ENCODE measurements at regions of chr6 and their contacts with region 1.

Region 1: GRCh38 chr6:32868257-32868788 is 14.3 kb downstream of the PSMB9 start:
- DNase-seq: peak; percentile 69 to 87 (median 82)
- ATAC-seq: peak; percentile 87
- H3K4me3 ChIP-seq: no peak overlapping the region
- H3K4me3 Mint-ChIP-seq: peak overlapping the region in 3 of 10 donors; percentile 0 to 65 (median 50)
- H3K27ac ChIP-seq: no peak overlapping the region
- H3K27ac Mint-ChIP-seq: peak overlapping the region in 4 of 9 donors; percentile 1 to 78 (median 14)
- H3K4me1 ChIP-seq: peaks cover 4 to 20% of the 10 kb centered on the region in 2 donors
- H3K4me1 Mint-ChIP-seq: peaks cover 18 to 36% (median 34%) of the 10 kb centered on the region in 7 donors
- H3K27me3 ChIP-seq: no peaks in the 10 kb centered on the region
- H3K27me3 Mint-ChIP-seq: peaks cover 0 to 4% (median 0%) of the 10 kb centered on the region in 5 donors

Region 2: DNA sequence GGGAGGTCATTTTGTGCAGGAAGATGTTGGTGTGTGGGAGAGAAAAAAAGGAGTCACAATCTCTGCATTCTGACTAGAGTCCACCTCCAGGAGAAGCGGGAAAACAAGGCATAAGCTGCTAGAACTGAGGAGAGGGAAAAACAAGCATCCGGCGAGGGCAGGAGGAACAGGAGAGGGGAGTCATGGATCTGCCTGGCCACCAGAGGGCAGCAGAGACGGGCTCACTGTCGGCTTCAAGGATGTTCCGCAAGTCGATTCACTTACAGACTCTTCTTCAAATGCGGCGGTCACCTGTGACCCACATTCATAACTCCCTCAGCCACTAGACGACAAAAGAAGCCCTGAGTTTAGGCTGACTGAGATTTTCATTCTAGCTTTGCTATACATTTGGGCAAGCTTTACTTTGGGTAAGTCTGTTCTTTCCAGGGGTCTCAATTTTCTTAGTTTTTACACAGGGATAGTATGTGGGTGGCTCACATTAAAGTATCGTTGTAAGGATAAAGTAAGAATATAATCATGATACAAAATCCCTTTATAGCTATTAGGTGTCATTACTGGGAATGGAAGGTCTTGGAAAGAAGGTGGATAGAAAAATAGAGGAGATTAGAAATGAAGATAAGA is 454.8 kb before region 1 on chr6:
- CTCF ChIA-PET with region 1: interaction called, 27 read pairs
- POLR2A ChIA-PET with region 1: no interaction called
- intact Hi-C with region 1: loop called (anchors 1 to 5 kb)
- DNase-seq: peak; percentile 54 to 85 (median 79)
- ATAC-seq: peak; percentile 96
- H3K4me3 ChIP-seq: no peak overlapping the region
- H3K4me3 Mint-ChIP-seq: no peak overlapping the region
- H3K27ac ChIP-seq: no peak overlapping the region
- H3K27ac Mint-ChIP-seq: no peak overlapping the region
- H3K4me1 ChIP-seq: no peaks in the 10 kb centered on the region
- H3K4me1 Mint-ChIP-seq: peaks cover 3 to 14% (median 8%) of the 10 kb centered on the region in 7 donors
- H3K27me3 ChIP-seq: peaks cover 0 to 3% of the 10 kb centered on the region in 2 donors
- H3K27me3 Mint-ChIP-seq: peaks cover 30 to 62% (median 45%) of the 10 kb centered on the region in 5 donors

Region 3: DNA sequence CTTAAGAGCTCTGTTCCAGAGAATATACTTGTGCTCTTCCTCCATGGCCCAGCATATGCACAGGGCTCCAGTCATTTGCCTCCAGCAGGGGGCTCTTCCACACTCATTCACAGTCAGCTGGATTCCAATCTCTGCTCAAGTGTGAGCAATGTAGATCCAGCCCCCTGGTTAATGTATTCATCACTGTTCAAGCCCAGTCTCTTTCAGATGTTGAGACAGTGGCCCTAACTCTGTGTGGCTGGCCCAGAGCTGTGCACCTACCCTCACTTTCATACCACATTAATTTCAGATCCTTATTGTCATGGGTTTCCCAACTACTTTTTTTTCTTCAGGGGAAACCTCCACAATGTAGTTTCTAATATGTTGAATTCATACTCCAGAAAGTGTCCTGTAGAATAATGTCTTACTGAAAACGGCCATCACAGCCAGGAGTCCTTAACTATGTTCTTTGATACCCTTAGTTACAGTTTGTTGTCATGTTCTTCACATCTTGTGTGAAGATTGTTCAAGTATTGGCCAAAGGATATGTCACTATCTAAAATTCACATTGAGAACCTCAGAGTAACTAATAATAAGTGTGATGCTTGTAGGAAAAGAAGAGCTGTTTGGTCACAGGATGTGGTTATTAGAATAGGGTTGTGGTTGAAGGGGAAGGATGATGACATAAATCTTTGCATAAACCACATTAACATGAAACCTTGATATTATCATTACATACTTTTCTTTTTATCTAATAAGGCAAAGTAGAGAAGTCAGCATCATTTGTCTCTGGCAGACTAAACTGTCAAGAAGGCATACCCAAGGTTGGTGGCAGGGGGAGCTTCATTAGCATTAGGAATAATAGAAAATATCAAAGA is 245.6 kb before region 1 on chr6:
- CTCF ChIA-PET with region 1: no interaction called
- POLR2A ChIA-PET with region 1: interaction called, 4 read pairs
- intact Hi-C with region 1: loop called in 1 of 2 experiments (anchors 1 kb)
- DNase-seq: peak in 8 of 9 donors; percentile 26 to 90 (median 74)
- ATAC-seq: peak; percentile 87
- H3K4me3 ChIP-seq: peak overlapping the region; percentile 5
- H3K4me3 Mint-ChIP-seq: peak overlapping the region in 9 of 10 donors; percentile 14 to 86 (median 72)
- H3K27ac ChIP-seq: peak overlapping the region; percentile 67
- H3K27ac Mint-ChIP-seq: peak overlapping the region; percentile 62 to 97 (median 88)
- H3K4me1 ChIP-seq: peaks cover 29 to 31% of the 10 kb centered on the region in 2 donors
- H3K4me1 Mint-ChIP-seq: peaks cover 22 to 60% (median 46%) of the 10 kb centered on the region in 7 donors
- H3K27me3 ChIP-seq: no peaks in the 10 kb centered on the region
- H3K27me3 Mint-ChIP-seq: no peaks in the 10 kb centered on the region

Region 4: DNA sequence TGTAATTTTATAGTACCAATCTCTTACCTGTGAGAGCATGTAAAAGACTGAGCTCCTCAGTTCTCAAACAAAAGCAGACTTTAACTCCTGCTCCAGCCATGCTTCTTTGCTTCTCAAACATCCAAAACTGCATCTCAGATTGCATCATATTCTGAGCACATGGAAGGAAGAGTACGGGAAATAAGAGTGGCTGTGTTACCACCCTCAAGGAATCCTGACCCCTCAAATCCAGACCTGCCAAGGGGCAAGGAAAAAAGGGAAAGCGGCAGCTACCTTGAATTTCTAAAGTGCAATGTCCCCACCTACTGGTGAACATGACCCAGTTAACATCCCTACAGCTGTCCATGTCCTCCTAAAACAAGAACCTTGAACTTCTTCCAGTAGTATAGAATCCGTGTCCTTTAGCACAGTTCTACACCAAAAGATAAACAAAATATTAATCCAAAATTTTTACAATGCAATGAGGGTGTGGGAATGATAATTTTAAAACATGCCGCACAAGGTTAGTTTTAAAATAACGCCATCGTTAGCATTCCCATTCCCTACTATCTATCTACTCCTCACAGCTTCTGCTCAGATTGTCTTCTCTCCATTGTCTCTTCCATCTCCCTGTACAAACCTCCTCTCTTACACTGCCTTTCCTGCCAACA is 167.8 kb before region 1 on chr6:
- CTCF ChIA-PET with region 1: interaction called, 5 read pairs
- POLR2A ChIA-PET with region 1: no interaction called
- intact Hi-C with region 1: loop called in 1 of 2 experiments (anchors 1 kb)
- DNase-seq: peak in 6 of 9 donors; percentile 15 to 54 (median 38)
- ATAC-seq: peak; percentile 68
- H3K4me3 ChIP-seq: no peak overlapping the region
- H3K4me3 Mint-ChIP-seq: peak overlapping the region in 7 of 10 donors; percentile 25 to 61 (median 46)
- H3K27ac ChIP-seq: no peak overlapping the region
- H3K27ac Mint-ChIP-seq: no peak overlapping the region
- H3K4me1 ChIP-seq: no peaks in the 10 kb centered on the region
- H3K4me1 Mint-ChIP-seq: peaks cover 0 to 9% (median 5%) of the 10 kb centered on the region in 7 donors
- H3K27me3 ChIP-seq: no peaks in the 10 kb centered on the region
- H3K27me3 Mint-ChIP-seq: peaks cover 26 to 69% (median 43%) of the 10 kb centered on the region in 5 donors

Region 5: DNA sequence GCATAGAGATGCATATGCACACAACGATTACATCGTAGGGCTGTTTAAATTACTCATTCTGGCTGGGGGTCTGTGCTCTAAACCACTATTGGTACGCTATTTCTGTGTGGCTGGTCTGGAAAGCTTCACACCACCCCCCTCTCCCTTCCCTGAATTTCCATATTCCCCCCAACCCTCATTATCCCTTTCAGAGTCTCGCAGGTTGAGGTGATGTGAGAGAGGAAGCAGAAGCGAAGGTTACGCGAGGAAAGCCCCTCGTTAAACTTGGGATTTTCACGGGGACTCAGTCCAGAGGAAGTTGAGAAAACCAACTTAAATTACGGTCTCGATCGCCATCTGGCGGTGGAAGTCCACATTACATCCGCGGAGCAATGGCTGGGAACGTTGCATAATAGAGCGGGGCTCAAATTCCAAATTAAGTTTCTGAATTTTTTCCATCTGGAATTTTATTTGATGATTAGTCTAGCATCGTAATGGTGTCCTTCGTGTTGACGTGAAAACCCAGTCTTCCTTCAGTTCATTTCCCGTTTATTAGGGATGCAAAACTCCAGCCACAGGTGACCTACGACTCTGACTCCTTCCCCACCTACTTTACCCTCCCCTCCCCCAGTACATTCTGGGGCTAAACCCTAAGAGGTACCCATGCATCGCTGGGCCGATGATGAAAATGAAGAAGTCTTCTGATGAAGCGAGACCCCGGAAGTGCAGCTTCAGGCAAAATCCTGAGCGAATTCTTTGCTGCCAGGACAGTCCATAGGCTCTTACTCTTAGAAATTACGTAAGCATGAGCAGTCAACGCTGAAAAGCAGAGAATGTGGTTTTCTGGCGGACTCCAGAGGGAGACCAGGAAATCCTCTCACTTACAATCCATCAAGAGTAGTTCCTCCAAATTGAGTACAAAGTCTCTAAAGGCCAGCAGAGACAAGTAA is 71.2 kb before region 1 on chr6:
- CTCF ChIA-PET with region 1: interaction called, 7 read pairs
- POLR2A ChIA-PET with region 1: no interaction called
- intact Hi-C with region 1: loop called (anchors 1 to 2 kb)
- DNase-seq: peak; percentile 38 to 79 (median 62)
- ATAC-seq: peak; percentile 80
- H3K4me3 ChIP-seq: no peak overlapping the region
- H3K4me3 Mint-ChIP-seq: peak overlapping the region in 9 of 10 donors; percentile 35 to 80 (median 68)
- H3K27ac ChIP-seq: no peak overlapping the region
- H3K27ac Mint-ChIP-seq: peak overlapping the region in 1 of 9 donors; percentile 23
- H3K4me1 ChIP-seq: peaks cover 5 to 16% of the 10 kb centered on the region in 2 donors
- H3K4me1 Mint-ChIP-seq: peaks cover 15 to 35% (median 27%) of the 10 kb centered on the region in 7 donors
- H3K27me3 ChIP-seq: peaks cover 0 to 5% of the 10 kb centered on the region in 2 donors
- H3K27me3 Mint-ChIP-seq: peaks cover 0 to 70% (median 29%) of the 10 kb centered on the region in 5 donors

Region 6: DNA sequence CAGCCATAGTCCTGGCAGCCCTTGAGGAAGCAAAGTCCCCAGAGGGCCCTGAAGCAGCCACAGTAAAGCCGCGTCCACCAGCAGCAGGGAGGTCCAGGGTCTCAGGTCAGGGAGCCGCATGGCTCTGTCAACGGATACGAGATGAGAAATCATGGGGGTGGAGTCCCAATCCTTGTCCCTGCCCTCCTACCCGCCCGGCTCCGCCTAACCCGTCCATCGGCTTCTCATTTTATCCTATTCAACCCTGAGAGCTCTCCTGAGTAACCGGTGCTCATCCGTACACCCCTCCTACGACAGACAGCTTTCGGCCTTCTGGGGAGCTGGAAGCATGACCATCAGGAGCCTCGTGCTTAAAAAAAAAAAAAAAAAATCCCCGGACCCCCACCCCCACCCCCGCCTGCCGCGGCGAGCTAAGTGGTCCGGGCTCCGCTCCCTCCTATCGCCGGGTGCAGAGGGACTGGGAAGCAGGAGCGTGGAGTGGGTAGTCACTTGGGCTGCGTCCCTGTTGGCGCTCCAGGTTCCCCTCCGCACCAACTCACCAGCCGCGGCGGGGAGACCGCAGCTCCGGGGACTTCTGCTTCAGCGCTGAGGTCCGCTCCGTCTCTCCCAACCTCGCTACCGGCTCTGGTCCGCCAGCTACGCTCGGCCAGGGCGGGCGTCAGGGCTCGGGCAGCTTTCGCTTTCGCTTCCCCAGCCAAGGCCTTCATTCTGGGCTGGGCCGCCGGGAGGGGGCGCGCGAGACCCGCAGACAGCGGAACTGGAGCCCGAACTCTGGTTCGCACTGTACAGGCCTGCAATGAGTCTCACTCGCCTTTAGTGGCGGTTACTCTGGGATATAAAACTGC is 30.0 kb before region 1 on chr6 and contains the start of gene TAP2:
- CTCF ChIA-PET with region 1: interaction called, 177 read pairs
- POLR2A ChIA-PET with region 1: interaction called, 99 read pairs
- intact Hi-C with region 1: loop called (anchors 1 kb)
- DNase-seq: peak; percentile 93 to 100 (median 97)
- ATAC-seq: peak; percentile 97
- H3K4me3 ChIP-seq: peak within 1 kb of the TSS; percentile 87
- H3K4me3 Mint-ChIP-seq: peak within 1 kb of the TSS; percentile 85 to 98 (median 93)
- H3K27ac ChIP-seq: peak within 1 kb of the TSS; percentile 97
- H3K27ac Mint-ChIP-seq: peak within 1 kb of the TSS; percentile 89 to 100 (median 99)
- H3K4me1 ChIP-seq: peaks cover 52 to 64% of the 10 kb centered on the region in 2 donors
- H3K4me1 Mint-ChIP-seq: peaks cover 71 to 92% (median 84%) of the 10 kb centered on the region in 7 donors
- H3K27me3 ChIP-seq: no peaks in the 10 kb centered on the region
- H3K27me3 Mint-ChIP-seq: no peaks in the 10 kb centered on the region
- total RNA-seq, gene TAP2: 84.3 to 243 (median 117) TPM

Region 7: DNA sequence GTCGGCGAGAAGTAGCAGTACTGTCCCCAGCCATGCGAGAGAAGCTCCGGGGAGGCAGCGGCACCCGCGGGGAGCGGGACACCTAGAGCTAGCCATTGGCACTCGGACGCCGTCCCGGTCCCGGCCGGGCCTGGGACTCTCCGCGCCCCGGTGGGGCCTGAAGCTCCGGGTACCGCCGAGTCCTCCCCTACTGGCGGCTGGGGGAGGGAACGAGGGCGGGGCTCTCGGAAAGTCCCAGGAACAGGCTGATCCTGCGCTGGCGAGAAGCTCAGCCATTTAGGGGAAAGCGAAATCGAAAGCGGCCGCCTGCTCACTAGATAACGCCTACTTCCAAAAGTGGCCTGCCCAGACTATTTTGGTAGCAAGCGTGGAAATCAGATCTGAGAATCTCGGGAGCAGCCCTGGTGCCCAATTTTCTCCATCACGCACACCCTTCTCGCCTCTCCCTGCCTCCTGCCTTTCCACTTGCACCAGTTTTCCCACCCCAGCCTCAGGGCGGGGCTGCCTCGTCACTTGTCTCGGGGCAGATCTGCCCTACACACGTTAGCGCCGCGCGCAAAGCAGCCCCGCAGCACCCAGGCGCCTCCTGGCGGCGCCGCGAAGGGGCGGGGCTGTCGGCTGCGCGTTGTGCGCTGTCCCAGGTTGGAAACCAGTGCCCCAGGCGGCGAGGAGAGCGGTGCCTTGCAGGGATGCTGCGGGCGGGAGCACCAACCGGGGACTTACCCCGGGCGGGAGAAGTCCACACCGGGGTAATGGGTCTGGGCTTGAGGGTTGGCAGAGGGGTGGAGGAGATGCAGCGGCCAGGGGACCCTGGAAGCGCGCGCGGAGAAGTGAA is 14.6 kb before region 1 on chr6 and contains the starts of genes PSMB9 and TAP1:
- CTCF ChIA-PET with region 1: interaction called, 41 read pairs
- POLR2A ChIA-PET with region 1: interaction called, 66 read pairs
- intact Hi-C with region 1: loop called (anchors 1 kb)
- DNase-seq: peak; percentile 92 to 97 (median 94)
- ATAC-seq: peak; percentile 92
- H3K4me3 ChIP-seq: peak within 1 kb of the TSS; percentile 91
- H3K4me3 Mint-ChIP-seq: peak within 1 kb of the TSS; percentile 96 to 100 (median 100)
- H3K27ac ChIP-seq: peak within 1 kb of the TSS; percentile 100
- H3K27ac Mint-ChIP-seq: peak within 1 kb of the TSS; percentile 97 to 100 (median 100)
- H3K4me1 ChIP-seq: peaks cover 45 to 57% of the 10 kb centered on the region in 2 donors
- H3K4me1 Mint-ChIP-seq: peaks cover 61 to 80% (median 72%) of the 10 kb centered on the region in 7 donors
- H3K27me3 ChIP-seq: no peaks in the 10 kb centered on the region
- H3K27me3 Mint-ChIP-seq: no peaks in the 10 kb centered on the region
- total RNA-seq, gene PSMB9: 70.3 to 452 (median 90.5) TPM
- total RNA-seq, gene TAP1: 92.1 to 500 (median 103) TPM

Measured in naive thymus-derived CD4-positive, alpha-beta T cell (primary cell).